ENCODE measurements at regions of chr10 and their contacts with region 1.

Region 1: DNA sequence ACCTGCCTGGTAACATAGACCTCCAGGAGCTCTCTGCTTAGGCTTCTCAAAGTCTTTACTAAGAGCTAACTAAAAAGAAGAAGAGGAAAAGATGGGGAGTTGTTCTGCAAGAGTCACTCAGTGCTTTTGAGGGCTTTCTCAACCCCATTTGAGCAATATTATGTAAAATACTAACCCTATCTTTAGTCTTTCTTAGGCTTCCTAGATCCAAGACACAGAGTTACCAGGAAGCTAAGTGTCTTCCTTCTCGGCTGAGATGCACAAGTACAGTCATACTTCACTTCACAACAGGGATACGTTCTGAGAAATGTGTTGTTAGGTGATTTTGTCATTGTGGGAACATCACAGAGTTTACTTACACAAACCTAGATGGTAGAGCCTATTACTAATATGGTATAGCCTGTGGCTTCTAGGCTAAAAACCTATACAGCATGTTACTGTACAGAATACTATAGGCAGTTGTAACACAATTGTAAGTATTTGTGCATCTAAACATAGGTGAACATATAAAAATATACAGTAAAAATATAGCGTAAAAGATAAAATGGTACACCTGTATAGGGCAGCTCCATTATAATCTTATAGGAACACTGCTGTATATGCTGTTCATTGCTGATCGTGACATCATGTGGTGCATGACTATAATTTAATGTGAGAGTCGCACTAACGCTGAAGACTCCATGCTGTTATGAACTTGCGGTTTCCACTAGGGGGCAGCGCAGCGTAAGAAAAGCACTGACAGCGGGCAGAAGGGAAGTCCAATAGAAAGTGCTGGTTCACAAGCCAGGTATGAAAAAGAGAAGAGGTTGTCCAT is 16.3 kb downstream of the ANKRD22 start:
- DNase-seq: peak; percentile 85 to 90
- ATAC-seq: peak; percentile 80 to 97 (median 94)
- H3K4me3 ChIP-seq: no peak overlapping the region
- H3K27ac ChIP-seq: peak overlapping the region in 1 of 10 donors; percentile 63
- H3K4me1 ChIP-seq: peaks cover 0 to 36% (median 0%) of the 10 kb centered on the region in 9 donors
- H3K27me3 ChIP-seq: peaks cover 0 to 13% (median 0%) of the 10 kb centered on the region in 7 donors
- CTCF ChIP-seq: peak; percentile 77 to 94 (median 88)

Region 2: GRCh38 chr10:88800152-88801125 is 34.9 kb before region 1 on chr10:
- intact Hi-C with region 1: no loop called
- DNase-seq: no peak
- ATAC-seq: no peak
- H3K4me3 ChIP-seq: no peak overlapping the region
- H3K27ac ChIP-seq: no peak overlapping the region
- H3K4me1 ChIP-seq: no peaks in the 10 kb centered on the region
- H3K27me3 ChIP-seq: peaks cover 0 to 8% (median 0%) of the 10 kb centered on the region in 7 donors
- CTCF ChIP-seq: no peak

Region 3: GRCh38 chr10:88880282-88881076 is 45.2 kb after region 1 on chr10:
- intact Hi-C with region 1: loop called in 3 of 10 experiments (anchors 5 kb)
- DNase-seq: peak; percentile 84 to 85
- ATAC-seq: peak; percentile 93 to 97 (median 96)
- H3K4me3 ChIP-seq: peak overlapping the region; percentile 60 to 87 (median 79)
- H3K27ac ChIP-seq: peak overlapping the region; percentile 85 to 94 (median 90)
- H3K4me1 ChIP-seq: peaks cover 0 to 59% (median 29%) of the 10 kb centered on the region in 9 donors
- H3K27me3 ChIP-seq: peaks cover 0 to 6% (median 0%) of the 10 kb centered on the region in 7 donors
- CTCF ChIP-seq: peak in 7 of 9 donors; percentile 10 to 54 (median 34)

Region 4: DNA sequence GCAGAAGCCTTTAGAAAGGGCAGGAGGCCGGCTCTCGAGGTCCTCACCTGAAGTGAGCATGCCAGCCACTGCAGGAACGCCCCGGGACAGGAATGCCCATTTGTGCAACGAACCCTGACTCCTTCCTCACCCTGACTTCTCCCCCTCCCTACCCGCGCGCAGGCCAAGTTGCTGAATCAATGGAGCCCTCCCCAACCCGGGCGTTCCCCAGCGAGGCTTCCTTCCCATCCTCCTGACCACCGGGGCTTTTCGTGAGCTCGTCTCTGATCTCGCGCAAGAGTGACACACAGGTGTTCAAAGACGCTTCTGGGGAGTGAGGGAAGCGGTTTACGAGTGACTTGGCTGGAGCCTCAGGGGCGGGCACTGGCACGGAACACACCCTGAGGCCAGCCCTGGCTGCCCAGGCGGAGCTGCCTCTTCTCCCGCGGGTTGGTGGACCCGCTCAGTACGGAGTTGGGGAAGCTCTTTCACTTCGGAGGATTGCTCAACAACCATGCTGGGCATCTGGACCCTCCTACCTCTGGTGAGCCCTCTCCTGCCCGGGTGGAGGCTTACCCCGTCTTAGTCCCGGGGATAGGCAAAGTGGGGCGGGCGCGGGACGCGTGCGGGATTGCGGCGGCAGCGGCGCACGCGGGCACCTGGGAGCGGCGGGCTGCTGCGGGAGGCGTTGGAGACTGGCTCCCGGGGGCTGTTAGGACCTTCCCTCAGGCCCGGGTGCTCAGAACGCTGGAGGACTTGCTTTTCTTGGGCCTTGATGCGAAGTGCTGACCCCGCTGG is 155.3 kb after region 1 on chr10 and contains the start of gene FAS:
- intact Hi-C with region 1: loop called in 7 of 10 experiments (anchors 2 to 10 kb)
- DNase-seq: peak; percentile 67 to 81
- ATAC-seq: peak; percentile 68 to 90 (median 74)
- H3K4me3 ChIP-seq: peak within 1 kb of the TSS; percentile 53 to 90 (median 83)
- H3K27ac ChIP-seq: peak within 1 kb of the TSS; percentile 86 to 97 (median 96)
- H3K4me1 ChIP-seq: peaks cover 0 to 80% (median 34%) of the 10 kb centered on the region in 9 donors
- H3K27me3 ChIP-seq: no peaks in the 10 kb centered on the region
- CTCF ChIP-seq: no peak
- total RNA-seq, gene FAS: 2.5 to 10.1 (median 3.7) TPM

Region 5: DNA sequence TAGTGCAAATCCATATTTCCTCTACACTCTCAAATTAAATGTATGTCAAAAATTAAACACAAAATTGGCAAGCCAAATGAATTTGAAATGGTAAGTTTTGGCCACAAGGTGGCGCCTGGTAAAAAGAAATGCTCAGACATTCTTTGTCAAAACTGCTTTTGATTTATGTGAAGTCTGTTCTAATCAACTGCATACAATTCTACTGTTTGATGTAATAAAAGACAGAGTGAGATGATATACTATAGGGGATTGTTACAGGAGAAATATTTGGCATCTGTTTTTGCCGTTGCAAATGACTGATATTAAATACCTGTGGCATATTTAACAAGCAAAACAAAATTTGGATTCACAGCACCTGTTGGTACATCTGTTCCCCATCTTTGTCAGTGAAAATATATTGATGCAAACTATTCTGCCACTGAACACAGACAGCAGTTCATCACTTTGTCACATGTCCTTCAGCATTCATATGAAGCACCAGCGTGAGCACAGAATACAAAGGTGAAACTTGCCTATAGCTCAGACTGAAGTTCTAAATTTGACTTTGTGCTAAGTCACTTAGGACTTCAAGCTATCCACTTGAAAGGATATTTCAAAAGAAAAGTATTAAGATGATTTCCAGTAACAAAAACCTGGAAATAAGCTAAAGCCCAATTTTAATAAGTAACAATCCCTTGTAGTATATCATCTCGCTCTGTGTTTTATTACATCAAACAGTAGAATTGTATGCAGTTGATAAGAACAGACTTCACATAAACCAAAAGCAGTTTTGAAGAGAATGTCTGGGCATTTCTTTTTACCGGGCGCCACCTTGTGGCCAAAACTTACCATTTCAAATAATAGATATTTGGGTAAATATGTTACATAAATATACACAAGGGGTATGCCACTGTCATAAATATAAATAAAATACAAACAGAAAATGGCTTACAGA is 382.0 kb after region 1 on chr10:
- intact Hi-C with region 1: loop called in 9 of 10 experiments (anchors 5 to 10 kb)
- DNase-seq: peak in 1 of 2 donors; percentile 53
- ATAC-seq: peak in 3 of 8 donors; percentile 49 to 69 (median 55)
- H3K4me3 ChIP-seq: peak overlapping the region in 2 of 10 donors; percentile 3 to 4
- H3K27ac ChIP-seq: peak overlapping the region in 8 of 10 donors; percentile 10 to 61 (median 31)
- H3K4me1 ChIP-seq: peaks cover 0 to 16% (median 8%) of the 10 kb centered on the region in 9 donors
- H3K27me3 ChIP-seq: no peaks in the 10 kb centered on the region
- CTCF ChIP-seq: peak; percentile 72 to 87 (median 82)

Region 6: DNA sequence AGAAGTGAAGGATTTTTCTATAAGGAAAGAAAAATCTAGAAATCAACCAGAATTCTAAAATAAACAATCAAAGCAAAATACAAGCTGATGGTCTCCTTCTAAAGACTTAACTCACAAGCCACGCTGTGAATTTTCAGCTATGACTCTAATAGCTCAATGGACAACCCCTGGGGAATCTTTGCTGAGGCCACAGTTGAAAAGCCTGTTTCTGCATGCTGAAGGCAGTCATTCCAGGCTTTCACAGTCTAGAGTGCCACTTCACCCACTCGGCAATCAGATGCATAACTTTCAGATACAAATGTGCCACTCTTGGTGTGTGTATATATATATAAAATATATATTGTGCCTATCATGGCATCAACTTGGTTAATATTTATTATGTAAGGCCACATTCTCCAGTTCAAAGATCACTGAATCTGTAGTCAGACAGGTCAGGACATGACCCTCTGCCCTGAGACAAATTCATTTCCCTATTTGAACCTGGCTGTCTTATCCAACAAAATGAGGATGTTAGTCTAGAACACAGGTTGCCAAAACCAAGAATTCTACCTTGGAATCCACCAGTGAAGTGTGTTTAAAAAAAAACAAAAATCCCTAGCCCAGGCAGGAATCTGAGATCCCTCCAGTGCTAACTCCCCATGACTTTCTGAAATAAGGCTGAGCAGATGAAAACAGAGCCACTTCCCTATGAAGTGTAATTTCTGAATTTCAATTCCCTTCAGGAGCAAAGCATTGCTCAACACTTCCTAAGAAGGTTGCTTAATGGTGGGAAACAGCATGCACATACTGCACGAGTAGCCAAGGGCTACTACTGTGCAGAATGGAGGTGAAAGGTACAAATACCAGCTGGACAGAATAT is 406.4 kb after region 1 on chr10:
- intact Hi-C with region 1: no loop called
- DNase-seq: no peak
- ATAC-seq: peak in 5 of 8 donors; percentile 56 to 75 (median 69)
- H3K4me3 ChIP-seq: no peak overlapping the region
- H3K27ac ChIP-seq: peak overlapping the region in 3 of 10 donors; percentile 30 to 76 (median 41)
- H3K4me1 ChIP-seq: peaks cover 0 to 58% (median 23%) of the 10 kb centered on the region in 9 donors
- H3K27me3 ChIP-seq: no peaks in the 10 kb centered on the region
- CTCF ChIP-seq: no peak